ENCODE measurements at regions of chr2 and their contacts with region 1.

Region 1: DNA sequence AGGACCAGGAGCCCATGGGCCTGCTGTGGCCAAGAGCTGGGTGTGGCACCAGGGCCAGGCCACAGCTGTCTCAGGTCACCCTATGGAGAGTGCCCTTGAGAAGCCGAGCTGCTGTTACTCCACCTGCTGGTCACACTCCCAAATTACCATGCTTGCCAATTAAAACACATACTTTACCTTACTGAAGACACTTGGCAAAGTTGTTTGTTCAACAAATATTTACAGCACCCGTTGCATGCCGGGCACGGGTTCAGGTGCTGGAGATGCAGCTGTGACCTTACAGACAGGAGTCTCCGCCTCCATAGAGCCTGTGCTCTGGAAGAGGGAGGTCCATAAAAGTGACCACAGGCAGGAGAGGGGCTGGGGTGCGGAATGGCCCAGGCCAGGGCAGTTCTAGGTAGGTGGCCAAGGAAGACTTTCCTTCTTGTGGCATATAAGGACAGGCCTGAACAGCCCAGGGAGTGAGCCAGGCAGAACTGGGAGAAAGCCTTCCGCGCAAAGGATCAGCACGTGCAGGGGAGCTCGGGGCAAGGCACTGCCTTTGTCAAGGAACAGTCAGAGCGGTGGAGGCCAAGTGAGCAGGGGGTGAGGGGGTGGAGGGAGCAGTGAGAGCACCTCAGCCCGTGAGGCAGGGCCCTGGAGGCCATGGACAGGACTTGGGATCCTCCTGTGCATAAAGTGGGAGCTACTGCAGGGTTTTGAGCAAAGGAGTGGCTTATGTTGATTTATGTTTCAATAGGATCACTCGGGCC is 23.6 kb upstream of the RBM44 start:
- DNase-seq: peak; percentile 11
- ATAC-seq: peak; percentile 99
- H3K4me3 ChIP-seq: no peak overlapping the region
- H3K27ac ChIP-seq: no peak overlapping the region
- H3K4me1 ChIP-seq: no peaks in the 10 kb centered on the region
- H3K27me3 ChIP-seq: no peaks in the 10 kb centered on the region
- CTCF ChIP-seq: peak; percentile 64 to 73 (median 71); a peak in 5 of 6 replicates
- EP300 ChIP-seq: no peak
- POLR2A ChIP-seq: 0 out of 2 replicates have a peak, but pooled peaks have one; percentile 33
- RAD21 ChIP-seq: peak; percentile 55

Region 2: DNA sequence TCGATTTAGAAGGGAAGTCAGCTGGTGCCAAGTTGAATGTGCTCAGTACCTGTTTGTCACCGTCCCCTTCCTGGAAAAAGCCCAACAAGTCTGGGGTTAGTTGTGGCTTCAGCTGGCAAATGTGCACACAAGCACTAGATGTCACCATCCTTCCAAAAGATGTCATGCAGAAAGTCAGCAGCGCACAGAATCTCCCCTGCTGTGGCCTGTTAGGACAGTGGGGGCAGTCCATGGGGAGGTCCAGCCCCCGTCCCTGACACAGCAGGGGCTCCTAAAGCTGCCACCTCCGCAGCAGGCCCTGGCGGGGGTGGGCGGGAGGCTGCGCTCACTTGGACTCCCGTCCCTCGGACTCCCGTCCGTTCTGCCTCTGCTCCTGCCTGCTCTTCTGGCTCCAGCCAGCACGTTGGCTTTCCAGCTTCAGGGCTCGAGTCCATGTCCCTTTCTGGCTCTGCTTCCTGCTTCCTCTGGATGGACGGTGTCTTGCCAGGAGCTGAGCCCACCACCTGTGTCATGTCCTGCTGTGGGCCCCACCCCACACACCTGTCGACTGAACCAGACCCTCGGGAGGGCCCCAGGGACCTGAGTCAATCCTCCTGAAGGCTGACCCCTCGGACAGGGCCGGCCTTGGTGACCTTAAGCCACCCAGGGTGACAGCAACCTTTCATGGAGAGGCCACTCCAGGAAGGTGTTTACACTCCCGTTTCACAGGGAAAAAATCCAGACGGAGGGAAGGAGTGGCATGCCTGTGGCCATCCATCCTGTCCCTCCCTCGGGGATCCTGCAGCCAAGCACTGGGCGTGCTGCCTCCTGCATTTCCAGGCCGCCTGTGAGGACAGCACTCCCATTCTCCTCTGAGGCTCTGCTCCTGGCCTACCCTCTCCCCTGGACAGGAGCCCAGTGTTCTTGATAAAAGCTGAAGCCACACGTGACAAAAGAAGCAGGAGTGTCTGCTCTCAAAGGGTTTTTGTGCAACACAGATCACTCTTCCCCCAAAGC is 192.9 kb before region 1 on chr2:
- CTCF ChIA-PET with region 1: interaction called, 14 read pairs
- POLR2A ChIA-PET with region 1: no interaction called
- RAD21 ChIA-PET with region 1: interaction called, 4 read pairs
- SMC1A ChIA-PET with region 1: interaction called, 3 read pairs
- in situ Hi-C with region 1: no loop called
- intact Hi-C with region 1: loop called (anchors 1 kb)
- DNase-seq: peak; percentile 35
- ATAC-seq: peak; percentile 90
- H3K4me3 ChIP-seq: no peak overlapping the region
- H3K27ac ChIP-seq: no peak overlapping the region
- H3K4me1 ChIP-seq: no peaks in the 10 kb centered on the region
- H3K27me3 ChIP-seq: no peaks in the 10 kb centered on the region; a peak in 1 of 4 replicates
- CTCF ChIP-seq: peak; percentile 38 to 73 (median 53); a peak in 5 of 6 replicates
- EP300 ChIP-seq: no peak
- POLR2A ChIP-seq: no peak
- RAD21 ChIP-seq: peak; percentile 72

Region 3: GRCh38 chr2:237700512-237701032 is 74.4 kb before region 1 on chr2:
- CTCF ChIA-PET with region 1: interaction called, 10 read pairs
- POLR2A ChIA-PET with region 1: no interaction called
- RAD21 ChIA-PET with region 1: interaction called, 7 read pairs
- SMC1A ChIA-PET with region 1: no interaction called
- in situ Hi-C with region 1: no loop called
- intact Hi-C with region 1: no loop called
- DNase-seq: peak; percentile 54
- ATAC-seq: peak; percentile 68
- H3K4me3 ChIP-seq: peak overlapping the region; percentile 56
- H3K27ac ChIP-seq: peak overlapping the region; percentile 77
- H3K4me1 ChIP-seq: peaks cover 70% of the 10 kb centered on the region
- H3K27me3 ChIP-seq: no peaks in the 10 kb centered on the region
- CTCF ChIP-seq: no peak
- EP300 ChIP-seq: peak in 1 of 2 experiments; percentile 15; a peak in 1 of 4 replicates
- POLR2A ChIP-seq: peak; percentile 36
- RAD21 ChIP-seq: no peak

Region 4: DNA sequence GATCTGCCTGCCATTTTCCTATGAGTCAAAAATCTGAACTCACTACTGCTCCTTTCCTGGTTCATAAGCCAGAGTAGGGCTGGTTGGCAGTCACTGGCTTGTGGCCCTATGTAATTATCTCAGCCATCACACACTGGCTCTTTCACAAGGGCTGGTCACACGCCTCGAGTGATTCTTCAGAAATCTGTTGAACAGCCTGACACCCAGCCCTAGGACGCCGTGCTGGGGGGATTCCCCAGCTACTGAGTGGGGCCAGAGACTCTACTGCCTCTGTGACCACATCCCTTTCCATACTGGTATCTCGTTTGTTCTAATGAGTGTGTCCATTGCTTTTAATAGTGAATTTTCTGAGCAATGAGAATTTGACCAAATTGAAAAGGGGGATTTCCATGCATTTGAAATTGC is 22.2 kb before region 1 on chr2:
- CTCF ChIA-PET with region 1: interaction called, 16 read pairs
- POLR2A ChIA-PET with region 1: no interaction called
- RAD21 ChIA-PET with region 1: no interaction called
- SMC1A ChIA-PET with region 1: interaction called, 4 read pairs
- in situ Hi-C with region 1: no loop called
- intact Hi-C with region 1: no loop called
- DNase-seq: peak; percentile 83
- ATAC-seq: peak; percentile 100
- H3K4me3 ChIP-seq: no peak overlapping the region
- H3K27ac ChIP-seq: peak overlapping the region; percentile 88
- H3K4me1 ChIP-seq: peaks cover 14% of the 10 kb centered on the region
- H3K27me3 ChIP-seq: no peaks in the 10 kb centered on the region
- CTCF ChIP-seq: no peak
- EP300 ChIP-seq: peak; percentile 40 to 60; a peak in 2 of 4 replicates
- POLR2A ChIP-seq: no peak
- RAD21 ChIP-seq: no peak

Region 5: GRCh38 chr2:238009563-238009962 is 234.6 kb after region 1 on chr2:
- CTCF ChIA-PET with region 1: no interaction called
- POLR2A ChIA-PET with region 1: no interaction called
- RAD21 ChIA-PET with region 1: no interaction called
- SMC1A ChIA-PET with region 1: no interaction called
- in situ Hi-C with region 1: no loop called
- intact Hi-C with region 1: no loop called
- DNase-seq: no peak
- ATAC-seq: no peak
- H3K4me3 ChIP-seq: no peak overlapping the region
- H3K27ac ChIP-seq: no peak overlapping the region
- H3K4me1 ChIP-seq: no peaks in the 10 kb centered on the region
- H3K27me3 ChIP-seq: no peaks in the 10 kb centered on the region
- CTCF ChIP-seq: no peak
- EP300 ChIP-seq: no peak
- POLR2A ChIP-seq: no peak
- RAD21 ChIP-seq: no peak

Measured in GM12878 (cell line).